Natural killer cell (primary cell): ENCODE measurements at regions of chr1 and their contacts with region 1.

Region 1: GRCh38 chr1:108828022-108828961 is 28.6 kb downstream of the AKNAD1 start:
- DNase-seq: peak; percentile 59 to 79
- ATAC-seq: peak in 2 of 3 donors; percentile 70 to 80
- H3K4me3 ChIP-seq: no peak overlapping the region
- H3K4me3 Mint-ChIP-seq: no peak overlapping the region
- H3K27ac ChIP-seq: no peak overlapping the region
- H3K27ac Mint-ChIP-seq: no peak overlapping the region
- H3K4me1 ChIP-seq: peaks cover 9% of the 10 kb centered on the region
- H3K4me1 Mint-ChIP-seq: peaks cover 14 to 16% of the 10 kb centered on the region in 2 donors
- H3K27me3 ChIP-seq: no peaks in the 10 kb centered on the region
- H3K27me3 Mint-ChIP-seq: no peaks in the 10 kb centered on the region
- CTCF ChIP-seq: peak; percentile 76

Region 2: GRCh38 chr1:108816049-108816893 is 12.0 kb before region 1 on chr1:
- intact Hi-C with region 1: no loop called
- DNase-seq: no peak
- ATAC-seq: no peak
- H3K4me3 ChIP-seq: no peak overlapping the region
- H3K4me3 Mint-ChIP-seq: no peak overlapping the region
- H3K27ac ChIP-seq: no peak overlapping the region
- H3K27ac Mint-ChIP-seq: no peak overlapping the region
- H3K4me1 ChIP-seq: no peaks in the 10 kb centered on the region
- H3K4me1 Mint-ChIP-seq: peaks cover 0 to 4% of the 10 kb centered on the region in 2 donors
- H3K27me3 ChIP-seq: no peaks in the 10 kb centered on the region
- H3K27me3 Mint-ChIP-seq: peaks cover 0 to 5% of the 10 kb centered on the region in 2 donors
- CTCF ChIP-seq: no peak

Region 3: DNA sequence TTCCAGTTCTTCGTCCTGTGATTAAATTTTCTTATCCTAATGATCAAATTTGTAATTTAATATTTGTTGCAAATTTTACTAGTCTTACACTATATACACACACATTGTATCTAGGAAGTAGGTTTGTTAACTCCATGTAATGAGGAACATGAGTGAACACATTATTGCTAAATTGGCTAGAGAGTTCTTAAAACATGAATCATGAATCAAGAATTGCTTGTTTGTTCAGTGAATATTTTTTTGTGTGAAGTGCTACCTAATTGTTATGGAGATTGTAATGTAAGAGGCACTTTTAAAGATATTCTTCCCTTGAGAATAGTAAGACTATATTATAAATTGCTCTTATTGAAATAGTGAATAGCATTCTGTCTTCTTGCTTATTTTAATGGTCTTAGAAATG is 53.1 kb after region 1 on chr1:
- intact Hi-C with region 1: no loop called
- DNase-seq: no peak
- ATAC-seq: no peak
- H3K4me3 ChIP-seq: no peak overlapping the region
- H3K4me3 Mint-ChIP-seq: no peak overlapping the region
- H3K27ac ChIP-seq: no peak overlapping the region
- H3K27ac Mint-ChIP-seq: no peak overlapping the region
- H3K4me1 ChIP-seq: peaks cover 12% of the 10 kb centered on the region
- H3K4me1 Mint-ChIP-seq: peaks cover 8 to 11% of the 10 kb centered on the region in 2 donors
- H3K27me3 ChIP-seq: no peaks in the 10 kb centered on the region
- H3K27me3 Mint-ChIP-seq: no peaks in the 10 kb centered on the region
- CTCF ChIP-seq: no peak

Region 4: GRCh38 chr1:108897865-108898720 is 69.8 kb after region 1 on chr1:
- intact Hi-C with region 1: loop called (anchors 1 kb)
- DNase-seq: peak in 1 of 2 donors; percentile 72
- ATAC-seq: peak; percentile 83 to 91 (median 89)
- H3K4me3 ChIP-seq: no peak overlapping the region
- H3K4me3 Mint-ChIP-seq: no peak overlapping the region
- H3K27ac ChIP-seq: no peak overlapping the region
- H3K27ac Mint-ChIP-seq: no peak overlapping the region
- H3K4me1 ChIP-seq: no peaks in the 10 kb centered on the region
- H3K4me1 Mint-ChIP-seq: no peaks in the 10 kb centered on the region
- H3K27me3 ChIP-seq: no peaks in the 10 kb centered on the region
- H3K27me3 Mint-ChIP-seq: no peaks in the 10 kb centered on the region
- CTCF ChIP-seq: peak; percentile 76